ENCODE measurements at regions of chr3 and their contacts with region 1.

Region 1: DNA sequence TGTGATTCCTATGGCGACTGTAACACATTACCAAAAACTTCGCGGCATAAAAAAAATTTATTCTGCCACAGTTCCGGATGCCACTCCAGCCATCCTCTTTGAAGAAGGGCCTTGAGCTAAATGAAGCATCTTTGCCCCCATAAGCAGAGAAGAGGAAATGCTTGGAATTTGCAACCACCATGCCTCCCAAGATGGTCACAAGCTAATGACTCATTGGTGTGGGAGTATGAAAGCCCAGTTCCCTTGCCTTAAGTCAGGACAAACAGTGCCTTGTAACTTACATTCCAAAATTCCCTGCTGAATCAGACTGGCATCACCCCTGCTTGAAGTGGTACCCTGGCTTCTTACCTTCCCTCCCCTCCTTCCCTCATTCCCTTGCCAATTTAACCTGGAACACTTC is 1077.4 kb downstream of the EPHA3 start:
- DNase-seq: no peak
- H3K4me3 ChIP-seq: no peak overlapping the region
- H3K27ac ChIP-seq: no peak overlapping the region
- H3K4me1 ChIP-seq: no peaks in the 10 kb centered on the region
- H3K27me3 ChIP-seq: no peaks in the 10 kb centered on the region
- CTCF ChIP-seq: no peak
- EP300 ChIP-seq: no peak
- POLR2A ChIP-seq: no peak

Region 2: DNA sequence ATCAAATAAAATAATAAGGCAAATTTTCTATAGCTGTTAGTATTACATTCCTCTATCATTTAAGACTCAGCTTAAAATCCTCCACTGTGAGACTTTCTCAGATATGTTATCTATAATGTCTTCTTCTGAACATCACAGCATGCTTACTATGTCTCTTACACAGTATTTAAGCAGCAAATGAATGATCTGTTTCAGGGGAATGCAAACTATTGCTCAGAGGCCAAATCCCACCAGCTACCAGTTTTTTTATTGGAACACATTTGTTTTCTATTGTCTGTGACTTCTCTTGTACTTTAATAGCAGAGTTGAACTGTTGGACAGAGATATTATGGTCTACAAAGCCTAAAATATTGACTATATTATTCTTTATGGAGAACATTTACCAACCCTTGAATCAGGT is 1975.5 kb before region 1 on chr3:
- in situ Hi-C with region 1: loop called in 3 of 4 experiments (anchors 25 kb)
- intact Hi-C with region 1: loop called (anchors 5 kb)
- DNase-seq: no peak
- H3K4me3 ChIP-seq: no peak overlapping the region
- H3K27ac ChIP-seq: no peak overlapping the region
- H3K4me1 ChIP-seq: no peaks in the 10 kb centered on the region
- H3K27me3 ChIP-seq: no peaks in the 10 kb centered on the region
- CTCF ChIP-seq: no peak
- EP300 ChIP-seq: no peak
- POLR2A ChIP-seq: no peak

Region 3: GRCh38 chr3:89974903-89975519 is 209.8 kb before region 1 on chr3:
- in situ Hi-C with region 1: no loop called
- intact Hi-C with region 1: no loop called
- DNase-seq: no peak
- H3K4me3 ChIP-seq: no peak overlapping the region
- H3K27ac ChIP-seq: no peak overlapping the region
- H3K4me1 ChIP-seq: no peaks in the 10 kb centered on the region
- H3K27me3 ChIP-seq: no peaks in the 10 kb centered on the region
- CTCF ChIP-seq: no peak
- EP300 ChIP-seq: no peak
- POLR2A ChIP-seq: no peak